ENCODE measurements at regions of chr6 and their contacts with region 1.

Region 1: GRCh38 chr6:25490018-25490801 is 161.8 kb upstream of the SCGN start:
- DNase-seq: no peak
- H3K4me3 ChIP-seq: no peak overlapping the region
- CTCF ChIP-seq: peak; percentile 76

Region 2: GRCh38 chr6:25218346-25218745 is 271.9 kb before region 1 on chr6:
- CTCF ChIA-PET with region 1: interaction called, 15 read pairs
- POLR2A ChIA-PET with region 1: no interaction called
- DNase-seq: no peak
- H3K4me3 ChIP-seq: no peak overlapping the region
- CTCF ChIP-seq: no peak

Region 3: DNA sequence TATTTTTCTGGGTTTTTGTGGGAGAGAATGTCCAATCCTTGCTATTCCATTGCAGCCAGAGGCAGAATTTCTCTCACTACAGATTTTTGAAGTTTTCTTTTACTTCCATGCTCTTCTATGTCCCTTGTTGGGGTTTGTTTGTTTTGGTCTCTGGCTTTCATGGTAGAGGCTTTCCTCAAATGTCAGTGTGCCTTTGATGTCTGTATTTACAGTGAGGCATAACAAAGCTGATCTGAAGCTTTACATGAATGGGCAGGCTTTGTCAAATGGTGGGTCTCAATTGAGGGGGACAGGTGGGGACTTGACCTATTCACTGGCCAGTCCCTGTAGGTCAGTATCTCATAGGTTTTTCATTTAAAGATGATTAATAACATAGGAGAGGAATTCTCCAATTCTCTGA is 219.7 kb before region 1 on chr6:
- CTCF ChIA-PET with region 1: interaction called, 119 read pairs
- POLR2A ChIA-PET with region 1: interaction called, 3 read pairs
- DNase-seq: no peak
- H3K4me3 ChIP-seq: no peak overlapping the region
- CTCF ChIP-seq: no peak

Region 4: GRCh38 chr6:25476831-25477590 is 13.2 kb before region 1 on chr6:
- CTCF ChIA-PET with region 1: interaction called, 21 read pairs
- POLR2A ChIA-PET with region 1: no interaction called
- DNase-seq: no peak
- H3K4me3 ChIP-seq: no peak overlapping the region
- CTCF ChIP-seq: no peak

Region 5: GRCh38 chr6:25512560-25512959 is 22.4 kb after region 1 on chr6:
- CTCF ChIA-PET with region 1: interaction called, 48 read pairs
- POLR2A ChIA-PET with region 1: no interaction called
- DNase-seq: no peak
- H3K4me3 ChIP-seq: no peak overlapping the region
- CTCF ChIP-seq: no peak

Measured in AG04449 (cell line).